ENCODE measurements at regions of chr11 and their contacts with region 1.

Region 1: DNA sequence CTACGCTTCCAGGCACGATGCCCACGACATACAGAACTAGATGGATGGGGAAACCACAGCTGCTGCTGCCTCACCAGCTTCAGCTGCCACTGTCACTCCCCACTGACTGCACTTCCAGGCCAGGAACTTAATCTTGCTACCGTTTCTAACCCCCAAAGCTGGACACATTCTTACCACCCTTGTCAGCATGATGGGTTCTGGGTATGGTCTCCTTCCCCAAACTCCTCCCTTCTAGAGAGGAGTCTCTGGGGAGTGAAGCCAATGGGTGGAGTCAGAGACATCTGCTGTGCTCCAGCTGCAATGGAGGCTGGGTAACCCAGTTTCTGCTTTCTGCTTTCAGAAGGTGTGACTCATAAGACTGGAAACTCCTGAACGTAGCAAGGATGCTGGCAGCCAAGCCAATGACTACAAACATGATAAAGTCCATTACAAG is 87.0 kb upstream of the THY1 start:
- DNase-seq: no peak
- ATAC-seq: peak; percentile 84
- H3K4me3 Mint-ChIP-seq: no peak overlapping the region
- H3K27ac Mint-ChIP-seq: peak overlapping the region; percentile 75
- H3K4me1 Mint-ChIP-seq: peaks cover 35% of the 10 kb centered on the region
- H3K27me3 Mint-ChIP-seq: peaks cover 2% of the 10 kb centered on the region
- CTCF ChIP-seq: no peak

Region 2: DNA sequence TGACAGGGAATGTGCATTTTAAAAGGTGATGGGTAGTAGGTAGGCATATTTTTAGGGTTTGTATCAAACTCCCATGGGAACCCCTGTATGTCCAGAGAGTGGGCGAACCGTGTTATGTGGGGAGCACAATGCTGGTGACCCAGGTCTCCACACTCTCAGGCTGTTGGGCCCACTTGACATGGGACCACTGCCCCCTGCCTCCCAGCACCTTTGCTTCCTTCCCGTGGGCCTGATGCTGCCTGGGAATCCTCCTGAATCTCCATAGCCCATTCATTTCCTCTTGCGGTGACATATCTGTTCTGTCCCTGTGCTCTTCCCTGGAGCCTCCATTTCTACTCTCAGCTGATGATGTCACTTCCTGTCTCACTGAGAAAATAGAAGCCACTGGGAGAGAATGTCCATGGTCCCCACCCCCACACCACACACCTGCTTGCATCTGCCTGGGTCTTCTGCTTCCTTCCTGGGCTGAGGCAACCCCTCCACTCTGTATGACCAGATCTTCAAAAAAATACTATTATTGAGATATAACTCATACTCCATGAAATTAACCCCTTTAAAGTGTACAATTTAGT is 31.2 kb before region 1 on chr11:
- CTCF ChIA-PET with region 1: no interaction called
- POLR2A ChIA-PET with region 1: no interaction called
- intact Hi-C with region 1: no loop called
- DNase-seq: no peak
- ATAC-seq: no peak
- H3K4me3 Mint-ChIP-seq: no peak overlapping the region
- H3K27ac Mint-ChIP-seq: no peak overlapping the region
- H3K4me1 Mint-ChIP-seq: peaks cover 5% of the 10 kb centered on the region
- H3K27me3 Mint-ChIP-seq: peaks cover 41% of the 10 kb centered on the region
- CTCF ChIP-seq: no peak

Region 3: DNA sequence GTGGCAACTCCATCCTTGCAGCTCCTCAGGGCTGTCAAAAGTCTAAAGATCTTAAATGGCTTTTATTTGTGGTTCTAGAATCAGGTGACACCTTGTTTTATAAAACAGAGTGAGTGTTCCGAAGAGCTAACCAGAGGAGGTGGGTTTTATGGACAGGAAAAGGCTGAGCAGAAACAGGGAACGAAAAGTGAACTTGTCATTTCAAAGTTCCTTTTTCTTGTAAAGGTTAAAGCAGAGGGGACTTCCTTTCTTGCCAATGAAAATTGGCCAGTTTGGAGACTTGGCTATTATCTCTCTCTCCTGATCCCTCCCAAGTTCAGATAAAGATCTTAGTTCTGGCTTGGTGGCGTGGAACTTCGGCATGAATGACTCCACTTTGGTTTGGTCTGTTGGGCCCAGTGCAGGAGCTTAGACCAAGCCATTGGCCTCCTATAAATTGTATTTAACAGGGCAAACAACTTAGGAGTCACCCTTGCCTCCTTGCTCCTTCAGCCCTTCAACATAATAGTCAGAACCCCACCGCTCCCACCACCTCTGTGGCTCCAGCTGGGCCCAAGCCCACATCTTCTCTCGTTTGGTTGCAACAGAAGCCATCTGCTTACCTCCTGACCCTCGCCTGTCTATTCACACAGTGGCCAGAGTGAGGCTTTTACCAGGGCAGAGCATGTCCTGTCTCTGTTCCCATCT is 15.3 kb after region 1 on chr11:
- CTCF ChIA-PET with region 1: interaction called, 3 read pairs
- POLR2A ChIA-PET with region 1: interaction called, 16 read pairs
- intact Hi-C with region 1: loop called (anchors 1 kb)
- DNase-seq: no peak
- ATAC-seq: peak; percentile 34
- H3K4me3 Mint-ChIP-seq: peak overlapping the region; percentile 39
- H3K27ac Mint-ChIP-seq: peak overlapping the region; percentile 79
- H3K4me1 Mint-ChIP-seq: peaks cover 20% of the 10 kb centered on the region
- H3K27me3 Mint-ChIP-seq: no peaks in the 10 kb centered on the region
- CTCF ChIP-seq: no peak

Region 4: GRCh38 chr11:119538753-119539152 is 28.8 kb after region 1 on chr11:
- CTCF ChIA-PET with region 1: no interaction called
- POLR2A ChIA-PET with region 1: no interaction called
- intact Hi-C with region 1: no loop called
- DNase-seq: no peak
- ATAC-seq: no peak
- H3K4me3 Mint-ChIP-seq: no peak overlapping the region
- H3K27ac Mint-ChIP-seq: no peak overlapping the region
- H3K4me1 Mint-ChIP-seq: no peaks in the 10 kb centered on the region
- H3K27me3 Mint-ChIP-seq: peaks cover 29% of the 10 kb centered on the region
- CTCF ChIP-seq: no peak

Region 5: GRCh38 chr11:119607726-119608125 is 97.7 kb after region 1 on chr11:
- CTCF ChIA-PET with region 1: no interaction called
- POLR2A ChIA-PET with region 1: no interaction called
- intact Hi-C with region 1: no loop called
- DNase-seq: no peak
- ATAC-seq: no peak
- H3K4me3 Mint-ChIP-seq: no peak overlapping the region
- H3K27ac Mint-ChIP-seq: no peak overlapping the region
- H3K4me1 Mint-ChIP-seq: no peaks in the 10 kb centered on the region
- H3K27me3 Mint-ChIP-seq: peaks cover 7% of the 10 kb centered on the region
- CTCF ChIP-seq: no peak

Measured in activated B cell treated with CpG ODN at 0.5 μM for 24 hours (primary cell).